T-cell (primary cell): ENCODE measurements at regions of chr7 and their contacts with region 1.

Region 1: DNA sequence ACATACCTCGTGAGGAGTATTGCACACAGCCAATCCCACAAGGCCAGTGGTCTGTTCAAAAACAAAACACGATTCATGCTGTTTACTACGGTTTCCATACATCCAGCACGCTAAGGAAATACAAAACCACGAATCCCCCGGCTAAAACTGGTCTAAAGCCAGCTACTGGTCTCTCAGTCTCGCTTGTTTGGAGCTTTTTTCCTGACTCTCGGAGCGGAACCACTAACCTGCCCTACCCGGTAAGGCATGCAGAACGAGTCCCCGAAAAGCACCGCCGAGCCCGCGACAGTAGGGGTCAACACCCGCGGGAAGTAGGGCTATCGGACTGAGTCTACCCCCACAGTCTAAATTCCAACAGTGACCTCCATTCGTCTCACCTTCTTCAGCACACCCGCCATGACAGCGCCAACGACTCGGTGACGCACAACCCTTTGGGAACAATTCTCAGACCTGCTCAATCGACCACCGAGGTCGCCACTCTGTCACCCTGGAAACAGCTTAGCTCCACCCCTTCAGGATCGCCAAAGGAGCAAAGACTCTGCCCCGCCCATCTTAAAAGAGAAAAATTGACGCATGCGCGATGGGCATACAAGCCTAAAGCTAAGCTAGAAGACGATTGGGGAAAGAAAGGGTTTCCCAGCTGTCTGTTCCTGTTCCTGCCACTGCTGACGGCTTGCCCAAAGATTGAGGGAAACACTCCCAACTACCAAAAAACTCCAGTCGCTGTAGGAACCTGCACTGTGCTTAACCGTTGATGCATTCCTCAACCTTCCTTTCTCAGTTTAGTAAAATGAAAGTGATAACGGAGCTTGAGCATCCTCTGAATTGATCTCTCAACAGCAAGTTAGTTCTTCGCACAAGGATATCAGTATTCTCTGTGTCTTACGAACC is at the start of gene NDUFA5:
- DNase-seq: peak; percentile 91 to 99 (median 96)
- ATAC-seq: peak; percentile 96 to 99 (median 97)
- H3K4me3 ChIP-seq: peak within 1 kb of the TSS; percentile 76 to 97
- H3K4me3 Mint-ChIP-seq: no peak within 1 kb of the TSS
- H3K27ac ChIP-seq: peak within 1 kb of the TSS; percentile 84
- H3K27ac Mint-ChIP-seq: no peak within 1 kb of the TSS
- H3K4me1 ChIP-seq: peaks cover 10 to 12% of the 10 kb centered on the region in 2 experiments
- H3K4me1 Mint-ChIP-seq: peaks cover 12% of the 10 kb centered on the region in 3 donors
- H3K27me3 ChIP-seq: no peaks in the 10 kb centered on the region
- H3K27me3 Mint-ChIP-seq: peaks cover 2 to 6% of the 10 kb centered on the region in 2 donors
- total RNA-seq, gene NDUFA5: 47.0 to 56.5 (median 48.8) TPM

Region 2: DNA sequence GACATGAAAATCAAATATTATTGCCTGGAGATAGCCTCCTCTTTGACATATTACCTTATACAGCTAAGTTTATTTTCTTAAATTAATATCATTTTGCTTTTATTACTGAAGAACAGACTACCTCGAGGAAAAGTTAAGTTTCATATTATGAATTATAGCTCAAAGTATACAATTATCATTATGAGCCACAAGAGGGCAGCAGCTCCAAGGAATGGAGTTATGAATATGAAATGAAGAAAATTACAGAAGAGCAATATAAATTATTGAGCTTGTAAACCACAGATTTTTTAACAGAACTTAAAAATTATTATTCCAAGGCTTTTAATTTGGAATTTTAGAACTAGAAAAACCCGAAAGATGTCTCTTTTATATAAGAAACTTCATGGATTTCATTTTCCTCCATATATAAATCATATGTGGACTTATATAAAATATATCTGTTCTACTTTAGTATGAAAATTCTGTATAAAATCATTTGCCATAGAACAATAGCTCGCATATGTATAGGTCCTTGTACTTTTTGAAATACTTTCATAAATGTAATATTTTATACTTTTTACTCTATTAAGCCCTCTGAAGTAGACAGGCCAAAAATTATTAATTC is 63.3 kb before region 1 on chr7:
- CTCF ChIA-PET with region 1: interaction called, 3 to 29 read pairs
- POLR2A ChIA-PET with region 1: interaction called in 1 of 2 experiments, 3 read pairs
- DNase-seq: peak in 18 of 35 experiments; percentile 4 to 68 (median 12)
- ATAC-seq: peak in 1 of 4 experiments; percentile 52
- H3K4me3 ChIP-seq: no peak overlapping the region
- H3K4me3 Mint-ChIP-seq: no peak overlapping the region
- H3K27ac ChIP-seq: no peak overlapping the region
- H3K27ac Mint-ChIP-seq: no peak overlapping the region
- H3K4me1 ChIP-seq: no peaks in the 10 kb centered on the region
- H3K4me1 Mint-ChIP-seq: peaks cover 0 to 2% (median 0%) of the 10 kb centered on the region in 3 donors
- H3K27me3 ChIP-seq: peaks cover 2 to 4% of the 10 kb centered on the region in 2 experiments
- H3K27me3 Mint-ChIP-seq: peaks cover 15 to 16% of the 10 kb centered on the region in 2 donors

Region 3: DNA sequence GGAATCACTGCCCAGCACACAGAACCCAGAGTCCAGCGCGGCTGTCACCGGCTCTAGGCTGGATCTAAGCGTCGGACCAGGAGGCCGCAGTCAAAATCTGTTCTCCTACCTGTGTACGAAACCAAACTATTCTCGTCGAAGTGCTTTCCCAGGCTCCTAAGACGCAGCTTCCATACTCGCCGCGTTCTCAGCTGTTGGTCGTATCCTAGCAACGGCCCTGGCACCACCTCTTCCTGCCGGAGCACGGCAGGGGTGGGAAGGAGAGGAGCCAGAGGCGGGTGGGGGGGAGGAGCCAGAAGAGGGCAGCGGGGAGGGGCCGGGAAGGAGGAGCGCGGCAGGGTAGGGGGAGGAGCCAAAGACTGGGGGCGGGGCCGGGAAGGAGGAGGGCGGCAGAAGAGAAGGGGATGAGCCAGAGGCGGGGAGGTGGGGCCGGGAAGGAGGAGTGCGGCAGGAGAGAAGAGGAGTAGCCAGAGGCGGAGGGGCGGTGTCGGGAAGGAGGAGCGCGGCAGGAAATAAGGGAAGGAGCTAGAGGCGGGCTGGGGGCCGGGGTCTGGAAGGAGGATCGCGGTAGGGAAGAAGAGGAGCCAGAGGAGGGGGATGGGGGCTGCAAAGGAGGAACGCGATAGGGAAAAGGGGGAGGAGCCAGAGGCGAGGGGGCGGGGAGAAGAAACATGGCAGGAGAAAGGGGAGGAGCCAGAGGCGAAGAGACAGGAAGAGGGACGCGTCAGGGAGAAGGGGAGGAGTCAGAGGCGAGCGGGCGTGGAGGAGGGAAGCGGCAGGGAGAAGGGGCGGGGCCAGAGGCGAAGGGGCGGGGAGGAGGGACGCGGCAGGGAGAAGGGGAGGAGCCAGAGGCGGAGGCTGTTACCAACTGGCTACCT is 23.0 kb before region 1 on chr7 and contains the start of gene IQUB:
- CTCF ChIA-PET with region 1: interaction called, 3 to 15 read pairs
- POLR2A ChIA-PET with region 1: interaction called, 4 to 5 read pairs
- DNase-seq: peak; percentile 72 to 96 (median 87)
- ATAC-seq: peak; percentile 79 to 91 (median 83)
- H3K4me3 ChIP-seq: peak within 1 kb of the TSS; percentile 41 to 80
- H3K4me3 Mint-ChIP-seq: peak within 1 kb of the TSS; percentile 84 to 91 (median 84)
- H3K27ac ChIP-seq: peak within 1 kb of the TSS; percentile 47
- H3K27ac Mint-ChIP-seq: peak within 1 kb of the TSS; percentile 70 to 87
- H3K4me1 ChIP-seq: peaks cover 3 to 23% of the 10 kb centered on the region in 2 experiments
- H3K4me1 Mint-ChIP-seq: peaks cover 22 to 27% (median 24%) of the 10 kb centered on the region in 3 donors
- H3K27me3 ChIP-seq: peaks cover 4 to 17% of the 10 kb centered on the region in 2 experiments
- H3K27me3 Mint-ChIP-seq: peaks cover 7 to 17% of the 10 kb centered on the region in 2 donors
- total RNA-seq, gene IQUB: 0.09 TPM in 2 of 5 donors, not detected in the others

Region 4: GRCh38 chr7:123748734-123749536 is 191.3 kb after region 1 on chr7 and contains the start of gene WASL:
- CTCF ChIA-PET with region 1: interaction called, 3 to 6 read pairs
- POLR2A ChIA-PET with region 1: interaction called in 1 of 2 experiments, 16 read pairs
- DNase-seq: peak; percentile 62 to 93 (median 82)
- ATAC-seq: peak; percentile 83 to 85 (median 84)
- H3K4me3 ChIP-seq: peak within 1 kb of the TSS; percentile 91 to 99
- H3K4me3 Mint-ChIP-seq: peak within 1 kb of the TSS; percentile 94 to 98 (median 95)
- H3K27ac ChIP-seq: peak within 1 kb of the TSS; percentile 94
- H3K27ac Mint-ChIP-seq: peak within 1 kb of the TSS; percentile 93 to 97
- H3K4me1 ChIP-seq: peaks cover 15 to 23% of the 10 kb centered on the region in 2 experiments
- H3K4me1 Mint-ChIP-seq: peaks cover 61 to 67% (median 63%) of the 10 kb centered on the region in 3 donors
- H3K27me3 ChIP-seq: peaks cover 0 to 3% of the 10 kb centered on the region in 2 experiments
- H3K27me3 Mint-ChIP-seq: no peaks in the 10 kb centered on the region
- total RNA-seq, gene WASL: 9.1 to 12.2 (median 9.8) TPM

Region 5: GRCh38 chr7:124930655-124931597 is 1373.3 kb after region 1 on chr7:
- CTCF ChIA-PET with region 1: interaction called in 1 of 2 experiments, 10 read pairs
- POLR2A ChIA-PET with region 1: no interaction called
- DNase-seq: peak in 1 of 35 experiments; percentile 10
- ATAC-seq: no peak
- H3K4me3 ChIP-seq: no peak overlapping the region
- H3K4me3 Mint-ChIP-seq: peak overlapping the region in 2 of 3 donors; percentile 15 to 22
- H3K27ac ChIP-seq: no peak overlapping the region
- H3K27ac Mint-ChIP-seq: peak overlapping the region in 1 of 2 donors; percentile 40
- H3K4me1 ChIP-seq: peaks cover 9% of the 10 kb centered on the region in 2 experiments
- H3K4me1 Mint-ChIP-seq: peaks cover 38 to 40% (median 39%) of the 10 kb centered on the region in 3 donors
- H3K27me3 ChIP-seq: no peaks in the 10 kb centered on the region
- H3K27me3 Mint-ChIP-seq: no peaks in the 10 kb centered on the region